MCF 10A (cell line): ENCODE measurements at regions of chr1 and their contacts with region 1.

Region 1: DNA sequence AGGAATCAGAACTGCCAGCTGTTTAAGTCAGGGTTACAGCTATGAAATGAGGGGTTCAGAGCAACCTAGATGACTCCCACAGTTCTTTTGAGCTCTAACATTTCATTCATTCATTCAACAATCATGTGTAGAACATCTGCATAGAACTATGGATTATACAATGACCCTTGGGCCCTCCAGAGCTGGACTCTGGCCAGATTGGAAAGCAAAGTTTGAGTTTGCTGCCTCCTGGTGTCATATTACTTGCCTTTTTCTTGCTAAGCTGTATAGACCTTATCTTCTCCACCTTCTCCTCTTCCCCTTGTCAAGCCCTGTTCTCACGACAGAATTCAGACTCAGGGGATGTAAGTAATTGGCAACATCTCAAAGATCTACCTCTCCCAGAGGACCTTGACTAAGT is 4.0 kb downstream of the CASQ2 start:
- DNase-seq: peak; percentile 68
- H3K4me3 Mint-ChIP-seq: no peak overlapping the region
- H3K27ac Mint-ChIP-seq: no peak overlapping the region
- H3K4me1 Mint-ChIP-seq: no peaks in the 10 kb centered on the region
- H3K27me3 Mint-ChIP-seq: no peaks in the 10 kb centered on the region
- CTCF ChIP-seq: peak; percentile 63

Region 2: DNA sequence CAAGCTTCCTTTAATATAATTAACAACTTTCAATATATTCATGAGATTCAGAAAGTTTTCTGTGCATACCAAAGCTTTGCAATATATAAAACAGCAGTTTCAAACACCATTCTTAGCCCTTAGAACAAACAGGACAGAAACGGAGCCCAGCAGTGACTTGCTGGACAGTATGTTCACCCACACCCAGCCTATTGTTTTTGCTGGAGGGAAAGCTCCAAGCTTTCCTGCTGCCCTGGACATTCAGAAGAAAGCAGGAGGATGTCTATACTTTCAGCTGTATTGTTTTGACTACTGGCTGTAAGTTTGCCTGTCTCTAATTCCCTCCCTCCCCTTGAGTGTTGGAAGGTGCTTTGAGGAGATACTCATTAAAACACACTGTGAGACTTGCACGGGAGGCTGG is 1104.3 kb before region 1 on chr1:
- CTCF ChIA-PET with region 1: no interaction called
- POLR2A ChIA-PET with region 1: no interaction called
- intact Hi-C with region 1: no loop called
- DNase-seq: no peak
- H3K4me3 Mint-ChIP-seq: no peak overlapping the region
- H3K27ac Mint-ChIP-seq: no peak overlapping the region
- H3K4me1 Mint-ChIP-seq: peaks cover 11% of the 10 kb centered on the region
- H3K27me3 Mint-ChIP-seq: no peaks in the 10 kb centered on the region
- CTCF ChIP-seq: no peak

Region 3: GRCh38 chr1:115555446-115555845 is 209.1 kb before region 1 on chr1:
- CTCF ChIA-PET with region 1: no interaction called
- POLR2A ChIA-PET with region 1: no interaction called
- intact Hi-C with region 1: no loop called
- DNase-seq: no peak
- H3K4me3 Mint-ChIP-seq: no peak overlapping the region
- H3K27ac Mint-ChIP-seq: no peak overlapping the region
- H3K4me1 Mint-ChIP-seq: no peaks in the 10 kb centered on the region
- H3K27me3 Mint-ChIP-seq: no peaks in the 10 kb centered on the region
- CTCF ChIP-seq: no peak

Region 4: DNA sequence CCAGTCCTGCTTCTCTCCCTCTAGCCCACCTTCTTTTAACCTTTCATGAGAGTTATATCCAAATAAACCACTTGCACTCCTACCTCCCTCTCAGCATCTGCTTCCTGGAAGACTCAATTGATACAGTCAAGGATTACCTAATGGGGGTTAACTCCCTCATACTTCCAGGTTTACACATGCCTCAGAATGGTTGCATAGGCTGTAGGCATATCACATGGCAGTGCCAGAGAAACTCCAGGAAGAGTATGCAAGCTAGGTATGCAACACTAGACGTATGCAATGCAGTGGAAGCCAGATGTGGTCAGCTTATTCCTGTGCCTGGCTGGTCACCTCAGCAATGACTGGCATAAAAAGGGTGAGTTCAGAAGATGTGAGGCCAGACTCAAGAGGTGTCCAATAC is 155.5 kb before region 1 on chr1:
- CTCF ChIA-PET with region 1: interaction called, 133 read pairs
- POLR2A ChIA-PET with region 1: interaction called, 29 read pairs
- intact Hi-C with region 1: loop called (anchors 1 kb)
- DNase-seq: peak; percentile 9
- H3K4me3 Mint-ChIP-seq: no peak overlapping the region
- H3K27ac Mint-ChIP-seq: no peak overlapping the region
- H3K4me1 Mint-ChIP-seq: peaks cover 12% of the 10 kb centered on the region
- H3K27me3 Mint-ChIP-seq: peaks cover 13% of the 10 kb centered on the region
- CTCF ChIP-seq: no peak

Region 5: DNA sequence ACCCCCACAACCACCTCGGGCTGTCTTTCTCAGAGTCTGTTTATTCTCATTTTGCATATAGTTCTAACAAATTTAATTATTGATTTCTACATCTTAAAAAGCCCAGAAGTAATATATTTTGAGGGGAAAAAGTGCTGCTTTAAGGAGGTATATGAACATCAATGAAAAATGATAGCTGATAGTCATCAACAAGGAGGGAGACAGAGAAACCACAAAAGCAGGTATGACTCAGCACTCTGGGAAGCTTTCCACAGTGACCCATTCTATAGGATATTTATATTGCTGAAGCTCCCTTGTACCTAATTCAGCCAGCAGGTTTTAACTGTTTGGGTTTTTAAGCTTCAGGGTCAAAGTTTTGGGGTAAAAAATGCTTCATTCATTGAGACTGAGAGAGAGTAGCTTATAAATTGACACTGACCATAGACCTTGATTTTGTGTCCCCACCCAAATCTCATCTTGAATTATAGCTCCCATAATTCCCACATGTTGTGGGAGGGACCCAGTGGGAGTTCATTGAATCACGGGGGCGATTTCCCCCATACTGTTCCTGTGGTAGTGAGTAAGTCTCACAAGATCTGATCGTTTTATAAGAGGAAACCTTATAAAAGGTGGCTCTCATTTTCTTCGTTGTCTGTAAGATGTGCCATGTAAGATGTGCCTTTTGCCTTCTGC is 95.4 kb before region 1 on chr1:
- CTCF ChIA-PET with region 1: interaction called, 10 read pairs
- POLR2A ChIA-PET with region 1: no interaction called
- intact Hi-C with region 1: no loop called
- DNase-seq: peak; percentile 81
- H3K4me3 Mint-ChIP-seq: no peak overlapping the region
- H3K27ac Mint-ChIP-seq: peak overlapping the region; percentile 75
- H3K4me1 Mint-ChIP-seq: peaks cover 27% of the 10 kb centered on the region
- H3K27me3 Mint-ChIP-seq: no peaks in the 10 kb centered on the region
- CTCF ChIP-seq: no peak

Region 6: DNA sequence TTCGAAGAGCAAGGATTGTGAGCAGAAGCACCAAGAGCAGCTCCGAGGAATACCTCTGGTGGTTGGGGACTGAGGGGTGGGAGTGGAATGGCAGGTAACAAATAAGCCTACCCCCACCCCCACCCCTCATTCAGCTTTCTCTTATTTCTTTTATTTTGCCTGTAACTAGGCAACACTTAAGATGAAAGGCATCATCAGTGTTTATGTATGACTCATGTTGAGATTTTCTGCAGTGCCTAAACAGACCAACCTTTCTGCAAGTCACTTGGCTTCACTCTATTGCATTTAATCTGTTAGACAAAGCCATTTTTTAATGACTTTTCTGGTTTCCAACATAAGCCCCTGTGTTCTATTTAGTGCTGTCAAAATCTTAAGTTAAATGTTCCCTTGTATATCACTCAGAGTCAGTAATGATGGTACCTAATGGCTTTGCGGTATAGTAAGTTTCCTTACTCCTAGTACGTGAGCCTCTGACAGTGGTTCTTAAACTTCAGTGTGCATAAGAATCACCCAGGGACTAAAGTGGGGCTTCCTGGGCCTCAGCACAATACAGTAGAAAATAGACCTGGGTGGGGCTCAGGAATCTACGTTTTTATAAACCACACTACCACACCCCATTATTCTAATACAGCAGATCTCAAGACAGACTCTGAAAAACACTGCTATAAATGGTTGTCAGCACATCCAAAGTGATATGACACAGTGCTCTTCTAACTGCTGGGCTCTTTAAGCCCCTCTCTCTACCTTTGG is 16.0 kb before region 1 on chr1:
- CTCF ChIA-PET with region 1: interaction called, 10 read pairs
- POLR2A ChIA-PET with region 1: no interaction called
- intact Hi-C with region 1: no loop called
- DNase-seq: peak; percentile 9
- H3K4me3 Mint-ChIP-seq: no peak overlapping the region
- H3K27ac Mint-ChIP-seq: peak overlapping the region; percentile 4
- H3K4me1 Mint-ChIP-seq: no peaks in the 10 kb centered on the region
- H3K27me3 Mint-ChIP-seq: peaks cover 20% of the 10 kb centered on the region
- CTCF ChIP-seq: no peak

Region 7: GRCh38 chr1:115958866-115959265 is 194.3 kb after region 1 on chr1:
- CTCF ChIA-PET with region 1: no interaction called
- POLR2A ChIA-PET with region 1: no interaction called
- intact Hi-C with region 1: no loop called
- DNase-seq: no peak
- H3K4me3 Mint-ChIP-seq: no peak overlapping the region
- H3K27ac Mint-ChIP-seq: no peak overlapping the region
- H3K4me1 Mint-ChIP-seq: peaks cover 7% of the 10 kb centered on the region
- H3K27me3 Mint-ChIP-seq: no peaks in the 10 kb centered on the region
- CTCF ChIP-seq: no peak

Region 8: GRCh38 chr1:115980998-115981993 is 216.8 kb after region 1 on chr1:
- CTCF ChIA-PET with region 1: interaction called, 18 read pairs
- POLR2A ChIA-PET with region 1: interaction called, 9 read pairs
- intact Hi-C with region 1: no loop called
- DNase-seq: peak; percentile 63
- H3K4me3 Mint-ChIP-seq: no peak overlapping the region
- H3K27ac Mint-ChIP-seq: no peak overlapping the region
- H3K4me1 Mint-ChIP-seq: peaks cover 29% of the 10 kb centered on the region
- H3K27me3 Mint-ChIP-seq: no peaks in the 10 kb centered on the region
- CTCF ChIP-seq: peak; percentile 46